Right ventricle myocardium inferior (tissue), 1 donor: ENCODE measurements at regions of chr5 and their contacts with region 1.

Region 1: GRCh38 chr5:65481635-65482295 is at the start of gene ADAMTS6:
- DNase-seq: peak; percentile 93
- ATAC-seq: peak; percentile 96
- total RNA-seq, gene ADAMTS6: 0.73 TPM

Region 2: DNA sequence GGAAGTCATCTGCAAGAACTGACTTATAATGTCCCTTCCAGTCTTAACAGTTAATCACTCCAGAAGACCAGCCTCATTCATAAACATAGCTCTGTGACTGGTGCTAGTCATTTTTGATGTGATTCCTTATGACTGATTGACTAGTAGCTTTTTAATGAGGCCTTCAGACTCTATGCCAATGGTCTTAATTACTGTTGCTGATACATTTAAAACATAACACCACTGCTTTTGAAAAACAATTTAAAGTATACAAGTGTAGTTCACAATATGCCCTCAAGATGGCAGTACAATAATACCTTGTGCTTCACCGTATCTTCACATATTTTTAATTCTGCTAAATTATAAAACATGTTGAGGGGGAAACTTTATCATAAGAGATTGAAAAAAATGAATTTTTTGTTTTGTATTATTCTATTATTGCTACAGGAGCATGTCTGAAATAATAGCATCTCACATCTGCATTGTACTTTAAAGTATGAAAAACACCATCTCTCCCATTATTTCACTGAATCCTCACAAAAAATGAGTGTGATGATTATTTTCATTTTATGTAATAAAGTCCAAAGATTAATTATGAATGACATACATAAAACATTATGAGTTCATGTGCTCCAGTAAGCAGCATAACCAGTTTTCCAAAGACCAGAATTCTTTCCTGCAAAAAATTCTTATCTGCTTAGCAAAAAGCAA is 846.6 kb before region 1 on chr5:
- intact Hi-C with region 1: loop called (anchors 10 kb)
- DNase-seq: no peak
- ATAC-seq: no peak

Region 3: GRCh38 chr5:64958757-64959391 is 522.9 kb before region 1 on chr5:
- intact Hi-C with region 1: loop called (anchors 5 kb)
- DNase-seq: no peak
- ATAC-seq: no peak

Region 4: GRCh38 chr5:65035211-65036206 is 446.3 kb before region 1 on chr5:
- intact Hi-C with region 1: loop called (anchors 1 kb)
- DNase-seq: peak; percentile 93
- ATAC-seq: peak; percentile 96

Region 5: GRCh38 chr5:65213921-65214525 is 267.7 kb before region 1 on chr5:
- intact Hi-C with region 1: loop called (anchors 5 kb)
- DNase-seq: no peak
- ATAC-seq: peak; percentile 50

Region 6: GRCh38 chr5:65418661-65419060 is 63.1 kb before region 1 on chr5:
- intact Hi-C with region 1: no loop called
- DNase-seq: no peak
- ATAC-seq: no peak

Region 7: DNA sequence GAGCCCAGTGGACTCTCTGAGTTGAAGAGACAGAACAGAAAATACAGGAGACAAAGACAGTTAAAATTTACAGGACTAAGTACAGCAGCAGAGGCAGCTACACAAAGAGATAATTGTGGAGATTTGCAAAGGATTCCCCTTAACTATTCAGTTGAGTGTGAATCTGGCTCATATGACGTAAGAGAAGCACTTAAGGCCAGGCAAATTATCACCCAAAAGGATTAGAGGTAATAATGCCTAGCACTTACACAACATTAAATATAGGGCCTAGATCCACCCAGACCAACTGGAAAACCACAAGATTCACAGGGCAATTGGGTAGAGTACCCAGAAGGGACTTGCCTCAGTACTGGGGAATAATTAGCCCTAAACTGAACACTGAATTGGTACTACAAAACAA is 41.3 kb before region 1 on chr5:
- intact Hi-C with region 1: no loop called
- DNase-seq: no peak
- ATAC-seq: no peak

Region 8: DNA sequence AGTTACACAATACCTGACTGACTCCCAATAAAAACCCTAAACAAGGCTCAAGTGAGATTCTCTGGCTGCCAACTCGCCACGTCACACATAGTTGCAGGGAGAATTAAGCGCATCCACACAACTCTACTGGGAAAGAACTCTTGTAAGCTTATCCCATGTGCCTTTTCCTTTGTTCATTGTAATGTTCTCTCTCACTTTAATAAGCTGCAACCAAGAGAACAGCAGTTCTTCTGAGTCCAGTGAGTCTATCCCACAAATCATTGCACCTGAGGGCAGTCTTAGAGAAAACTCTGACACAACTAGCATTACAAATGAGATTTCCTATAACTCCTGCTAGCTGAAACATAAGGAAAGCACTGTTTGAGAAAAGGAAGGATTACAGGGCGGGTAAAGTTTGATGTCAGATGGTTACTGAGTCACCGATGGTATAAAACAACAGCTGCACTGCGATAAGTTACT is 53.8 kb after region 1 on chr5:
- intact Hi-C with region 1: no loop called
- DNase-seq: no peak
- ATAC-seq: no peak